ENCODE measurements at regions of chr2 and their contacts with region 1.

Region 1: GRCh38 chr2:13193898-13194297 is 477.2 kb downstream of the TRIB2 start:
- DNase-seq: peak; percentile 65
- H3K4me3 ChIP-seq: no peak overlapping the region
- H3K27ac ChIP-seq: no peak overlapping the region
- H3K4me1 ChIP-seq: no peaks in the 10 kb centered on the region
- H3K27me3 ChIP-seq: no peaks in the 10 kb centered on the region
- CTCF ChIP-seq: peak; percentile 60

Region 2: DNA sequence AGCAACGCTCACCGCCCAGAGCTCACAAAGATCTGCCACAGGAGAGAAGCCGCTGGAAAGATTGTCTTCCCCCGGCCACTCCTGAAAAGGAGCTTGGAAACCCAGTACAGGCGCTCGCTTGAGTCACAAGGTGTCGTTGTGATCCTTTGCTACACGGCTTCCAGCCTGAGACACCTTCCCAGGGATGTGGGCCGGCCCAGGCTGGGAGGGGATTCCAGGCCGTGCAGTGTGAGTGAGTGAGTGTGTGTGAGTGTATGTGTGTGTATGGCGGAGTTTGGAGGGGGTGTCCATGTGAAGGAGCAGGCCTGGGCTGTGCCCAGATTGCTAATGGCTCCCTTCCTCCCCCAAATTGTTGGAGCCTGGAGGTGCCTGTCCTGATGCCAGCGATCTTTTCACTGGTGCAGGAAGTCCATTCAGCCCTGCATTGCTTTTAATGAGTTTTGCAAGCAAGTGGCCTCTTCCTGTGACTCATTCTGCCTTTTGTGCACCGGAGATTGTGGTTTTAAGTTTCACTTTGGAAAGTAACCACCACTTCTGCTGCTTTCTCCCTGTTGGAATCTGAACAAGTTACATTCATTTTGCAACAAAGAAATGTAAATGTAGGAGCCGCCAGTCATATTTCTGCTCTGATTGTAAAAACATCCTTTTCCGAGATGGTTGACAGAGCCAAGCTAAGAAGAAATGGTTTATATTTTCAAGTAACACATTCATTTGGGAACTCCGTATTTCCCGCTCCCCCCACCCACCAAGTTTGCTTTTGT is 1363.8 kb before region 1 on chr2:
- CTCF ChIA-PET with region 1: no interaction called
- POLR2A ChIA-PET with region 1: no interaction called
- intact Hi-C with region 1: no loop called
- DNase-seq: peak; percentile 99
- H3K4me3 ChIP-seq: peak overlapping the region; percentile 37
- H3K27ac ChIP-seq: peak overlapping the region; percentile 99
- H3K4me1 ChIP-seq: peaks cover 42% of the 10 kb centered on the region
- H3K27me3 ChIP-seq: no peaks in the 10 kb centered on the region
- CTCF ChIP-seq: peak; percentile 67

Region 3: DNA sequence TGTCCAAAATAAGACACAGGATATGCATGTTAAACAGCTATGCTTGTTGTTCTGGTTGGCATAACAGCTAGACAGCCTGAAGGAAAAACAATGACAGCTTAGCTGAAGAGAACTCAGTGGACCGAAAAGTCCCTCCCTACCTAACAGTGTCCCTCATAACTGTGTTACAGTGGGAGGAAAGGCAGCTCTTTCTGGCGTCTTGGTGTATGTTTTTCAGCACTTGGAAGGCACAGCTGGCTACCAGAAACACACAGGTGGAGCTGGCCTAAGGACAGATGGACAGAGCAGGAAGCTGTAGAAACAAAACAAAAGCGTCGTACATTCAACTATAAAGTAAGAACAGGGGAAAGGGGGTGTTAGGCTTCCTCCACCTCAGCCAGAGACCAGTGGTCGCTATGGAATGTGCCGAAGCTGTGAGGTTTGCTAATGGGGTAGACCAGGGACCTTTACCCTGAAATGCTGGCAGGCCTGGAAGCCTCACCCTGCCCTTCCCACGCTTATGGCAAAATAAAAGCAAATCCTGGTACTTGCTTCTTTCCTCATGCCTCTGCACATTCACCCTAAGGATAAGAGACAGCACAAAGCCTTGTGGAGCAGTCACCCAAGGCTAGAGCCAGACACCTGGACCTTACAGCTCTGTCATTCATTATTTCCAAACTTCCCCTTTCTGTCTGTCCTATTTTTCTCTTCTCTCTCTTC is 580.6 kb before region 1 on chr2:
- CTCF ChIA-PET with region 1: no interaction called
- POLR2A ChIA-PET with region 1: interaction called, 12 read pairs
- intact Hi-C with region 1: no loop called
- DNase-seq: peak; percentile 55
- H3K4me3 ChIP-seq: no peak overlapping the region
- H3K27ac ChIP-seq: peak overlapping the region; percentile 45
- H3K4me1 ChIP-seq: peaks cover 23% of the 10 kb centered on the region
- H3K27me3 ChIP-seq: no peaks in the 10 kb centered on the region
- CTCF ChIP-seq: no peak

Region 4: GRCh38 chr2:13021470-13021957 is 172.4 kb before region 1 on chr2:
- CTCF ChIA-PET with region 1: no interaction called
- POLR2A ChIA-PET with region 1: no interaction called
- intact Hi-C with region 1: no loop called
- DNase-seq: peak; percentile 64
- H3K4me3 ChIP-seq: no peak overlapping the region
- H3K27ac ChIP-seq: no peak overlapping the region
- H3K4me1 ChIP-seq: peaks cover 10% of the 10 kb centered on the region
- H3K27me3 ChIP-seq: peaks cover 8% of the 10 kb centered on the region
- CTCF ChIP-seq: no peak

Region 5: GRCh38 chr2:13056259-13056843 is 137.5 kb before region 1 on chr2:
- CTCF ChIA-PET with region 1: no interaction called
- POLR2A ChIA-PET with region 1: no interaction called
- intact Hi-C with region 1: loop called (anchors 10 kb)
- DNase-seq: peak; percentile 48
- H3K4me3 ChIP-seq: no peak overlapping the region
- H3K27ac ChIP-seq: no peak overlapping the region
- H3K4me1 ChIP-seq: no peaks in the 10 kb centered on the region
- H3K27me3 ChIP-seq: no peaks in the 10 kb centered on the region
- CTCF ChIP-seq: peak; percentile 64; the same call in 1 of the 2 replicates

Region 6: DNA sequence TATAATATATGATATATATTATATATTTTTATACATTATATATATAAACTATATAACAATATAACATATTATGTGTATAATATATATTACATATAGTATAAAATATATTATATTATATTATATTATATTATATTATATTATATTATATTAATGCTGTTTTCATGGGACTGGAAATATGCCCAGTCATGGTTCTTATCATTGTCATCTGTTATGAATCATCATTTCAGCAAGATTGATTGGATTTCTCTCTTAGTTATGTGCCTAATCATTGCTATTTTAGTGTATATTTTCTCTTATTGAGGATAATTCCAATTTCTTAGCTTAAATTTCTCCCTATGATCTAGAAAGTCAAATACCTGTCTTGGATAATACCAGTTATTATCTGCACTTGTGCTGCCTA is 140.6 kb after region 1 on chr2:
- CTCF ChIA-PET with region 1: no interaction called
- POLR2A ChIA-PET with region 1: no interaction called
- intact Hi-C with region 1: no loop called
- DNase-seq: no peak
- H3K4me3 ChIP-seq: no peak overlapping the region
- H3K27ac ChIP-seq: no peak overlapping the region
- H3K4me1 ChIP-seq: no peaks in the 10 kb centered on the region
- H3K27me3 ChIP-seq: peaks cover 3% of the 10 kb centered on the region
- CTCF ChIP-seq: no peak

Region 7: GRCh38 chr2:13413989-13414388 is 220.1 kb after region 1 on chr2:
- CTCF ChIA-PET with region 1: no interaction called
- POLR2A ChIA-PET with region 1: no interaction called
- intact Hi-C with region 1: loop called (anchors 10 kb)
- DNase-seq: peak; percentile 8
- H3K4me3 ChIP-seq: no peak overlapping the region
- H3K27ac ChIP-seq: no peak overlapping the region
- H3K4me1 ChIP-seq: no peaks in the 10 kb centered on the region
- H3K27me3 ChIP-seq: no peaks in the 10 kb centered on the region
- CTCF ChIP-seq: 0 out of 2 replicates have a peak, but pooled peaks have one; percentile 14

Region 8: DNA sequence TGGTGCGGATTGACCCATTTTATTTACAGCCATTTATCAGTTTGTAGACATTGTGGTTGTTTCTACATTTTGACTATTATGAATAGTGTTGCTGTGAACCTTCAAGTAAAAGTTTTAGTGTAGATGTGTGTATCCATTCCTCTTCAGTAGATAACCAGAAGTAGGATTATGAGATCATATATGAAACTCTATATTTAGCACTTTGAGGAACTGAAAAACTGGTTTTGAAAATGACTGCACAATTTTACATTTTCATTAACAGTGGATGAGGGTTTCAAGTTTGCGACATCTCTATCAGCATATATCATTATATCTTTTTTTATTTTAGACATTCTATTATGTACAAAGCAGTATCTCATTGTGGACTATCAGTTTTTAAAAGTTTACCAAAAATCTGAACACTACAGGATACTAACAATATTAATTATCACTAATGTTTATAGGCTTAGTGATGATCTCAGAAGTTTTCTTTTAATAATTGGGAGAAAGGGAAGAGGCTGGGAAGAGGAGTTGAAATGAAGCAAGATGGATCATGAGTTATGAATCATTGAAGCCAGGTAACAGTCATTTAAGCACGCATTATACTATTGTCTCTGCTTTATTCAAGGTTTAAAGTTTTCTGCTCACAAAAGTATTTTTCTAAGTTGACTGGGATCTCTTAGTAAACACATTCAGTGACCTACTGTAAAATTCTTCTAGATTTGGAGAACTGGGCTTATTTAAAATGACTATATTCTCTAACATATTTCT is 1109.6 kb after region 1 on chr2:
- CTCF ChIA-PET with region 1: no interaction called
- POLR2A ChIA-PET with region 1: no interaction called
- intact Hi-C with region 1: no loop called
- DNase-seq: no peak
- H3K4me3 ChIP-seq: no peak overlapping the region
- H3K27ac ChIP-seq: no peak overlapping the region
- H3K4me1 ChIP-seq: no peaks in the 10 kb centered on the region
- H3K27me3 ChIP-seq: peaks cover 12% of the 10 kb centered on the region
- CTCF ChIP-seq: no peak

Region 9: GRCh38 chr2:14944562-14945346 is 1750.9 kb after region 1 on chr2:
- CTCF ChIA-PET with region 1: no interaction called
- POLR2A ChIA-PET with region 1: no interaction called
- intact Hi-C with region 1: loop called (anchors 10 kb)
- DNase-seq: peak; percentile 82
- H3K4me3 ChIP-seq: no peak overlapping the region
- H3K27ac ChIP-seq: no peak overlapping the region
- H3K4me1 ChIP-seq: peaks cover 7% of the 10 kb centered on the region
- H3K27me3 ChIP-seq: peaks cover 39% of the 10 kb centered on the region
- CTCF ChIP-seq: peak; percentile 78

Region 10: GRCh38 chr2:15159751-15160177 is 1965.9 kb after region 1 on chr2:
- CTCF ChIA-PET with region 1: no interaction called
- POLR2A ChIA-PET with region 1: no interaction called
- intact Hi-C with region 1: loop called (anchors 10 kb)
- DNase-seq: peak; percentile 83
- H3K4me3 ChIP-seq: no peak overlapping the region
- H3K27ac ChIP-seq: no peak overlapping the region
- H3K4me1 ChIP-seq: no peaks in the 10 kb centered on the region
- H3K27me3 ChIP-seq: no peaks in the 10 kb centered on the region
- CTCF ChIP-seq: peak; percentile 82